AG04450 (cell line): ENCODE measurements at regions of chr7 and their contacts with region 1.

Region 1: DNA sequence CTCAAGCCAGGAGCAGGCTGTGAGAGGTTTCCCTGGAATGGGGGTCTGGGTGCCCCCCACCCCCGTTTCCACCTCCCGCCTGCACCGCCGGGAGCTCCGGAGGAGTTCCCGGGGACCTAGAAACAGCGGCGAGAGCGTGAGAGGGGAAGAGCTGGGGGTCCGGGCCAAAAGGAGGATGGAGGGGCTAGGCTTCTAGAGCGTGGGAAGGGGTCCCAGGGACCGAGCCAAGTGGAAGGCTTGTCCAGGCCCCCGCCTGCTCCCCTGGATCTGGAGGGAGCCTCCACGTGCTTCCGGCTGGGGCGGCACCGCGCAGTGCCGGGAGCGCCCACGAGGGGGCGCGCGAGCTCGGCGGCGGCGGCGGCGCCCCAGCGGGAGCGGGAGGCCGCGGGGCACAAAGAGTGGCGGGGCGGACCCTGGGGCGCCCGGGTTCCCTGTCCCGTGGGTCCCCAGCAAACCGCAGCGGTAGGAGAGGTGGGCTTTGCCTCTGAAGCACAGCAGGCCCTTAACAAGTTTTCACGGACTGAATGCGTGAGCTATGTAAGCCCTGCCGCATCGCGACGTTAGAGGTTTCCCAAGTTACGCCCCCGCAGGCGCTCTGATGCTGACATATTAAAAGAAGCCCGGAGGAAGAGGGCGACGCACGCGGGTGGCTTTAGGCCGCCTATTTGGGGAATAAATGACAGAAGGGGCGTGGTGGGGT is 104.4 kb upstream of the LRRC4 start:
- DNase-seq: no peak
- H3K4me3 ChIP-seq: peak overlapping the region; percentile 65
- H3K27ac ChIP-seq: no peak overlapping the region
- H3K27me3 ChIP-seq: peaks cover 66% of the 10 kb centered on the region
- CTCF ChIP-seq: peak; percentile 60

Region 2: DNA sequence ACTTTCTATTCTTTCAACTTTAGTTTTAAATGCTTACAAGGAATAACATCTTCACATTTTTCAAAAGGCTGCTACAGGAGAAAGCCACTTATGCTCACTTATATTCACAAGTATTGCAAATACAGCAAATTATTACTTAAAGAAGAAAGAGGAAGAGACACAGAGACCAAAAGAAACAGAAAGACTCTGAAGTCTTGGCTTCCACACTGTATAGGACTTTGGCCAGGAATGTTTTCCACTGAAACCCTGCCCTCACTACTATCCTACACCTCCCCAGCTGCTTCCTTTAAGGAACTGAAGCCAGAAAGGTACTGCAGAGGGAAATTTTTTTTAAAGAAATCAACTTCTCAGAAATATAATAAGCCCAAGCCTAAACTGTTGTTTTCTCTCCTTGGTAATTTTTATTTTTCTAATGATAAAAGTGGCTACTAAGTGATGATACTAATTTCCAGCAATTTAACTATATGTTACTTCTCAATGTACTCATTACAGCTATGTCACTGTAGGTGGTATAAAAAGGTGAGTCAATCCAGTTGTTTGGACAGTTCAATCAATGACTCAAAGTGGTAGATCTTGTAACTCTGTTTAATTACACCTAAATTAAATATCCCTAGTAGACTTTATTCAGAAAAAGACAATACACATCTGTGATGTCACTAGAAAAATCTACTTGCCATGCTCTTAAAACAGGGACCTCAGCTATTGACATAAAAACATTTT is 1114.5 kb before region 1 on chr7:
- CTCF ChIA-PET with region 1: no interaction called
- POLR2A ChIA-PET with region 1: no interaction called
- DNase-seq: no peak
- H3K4me3 ChIP-seq: no peak overlapping the region
- H3K27ac ChIP-seq: no peak overlapping the region
- H3K27me3 ChIP-seq: no peaks in the 10 kb centered on the region
- CTCF ChIP-seq: no peak

Region 3: DNA sequence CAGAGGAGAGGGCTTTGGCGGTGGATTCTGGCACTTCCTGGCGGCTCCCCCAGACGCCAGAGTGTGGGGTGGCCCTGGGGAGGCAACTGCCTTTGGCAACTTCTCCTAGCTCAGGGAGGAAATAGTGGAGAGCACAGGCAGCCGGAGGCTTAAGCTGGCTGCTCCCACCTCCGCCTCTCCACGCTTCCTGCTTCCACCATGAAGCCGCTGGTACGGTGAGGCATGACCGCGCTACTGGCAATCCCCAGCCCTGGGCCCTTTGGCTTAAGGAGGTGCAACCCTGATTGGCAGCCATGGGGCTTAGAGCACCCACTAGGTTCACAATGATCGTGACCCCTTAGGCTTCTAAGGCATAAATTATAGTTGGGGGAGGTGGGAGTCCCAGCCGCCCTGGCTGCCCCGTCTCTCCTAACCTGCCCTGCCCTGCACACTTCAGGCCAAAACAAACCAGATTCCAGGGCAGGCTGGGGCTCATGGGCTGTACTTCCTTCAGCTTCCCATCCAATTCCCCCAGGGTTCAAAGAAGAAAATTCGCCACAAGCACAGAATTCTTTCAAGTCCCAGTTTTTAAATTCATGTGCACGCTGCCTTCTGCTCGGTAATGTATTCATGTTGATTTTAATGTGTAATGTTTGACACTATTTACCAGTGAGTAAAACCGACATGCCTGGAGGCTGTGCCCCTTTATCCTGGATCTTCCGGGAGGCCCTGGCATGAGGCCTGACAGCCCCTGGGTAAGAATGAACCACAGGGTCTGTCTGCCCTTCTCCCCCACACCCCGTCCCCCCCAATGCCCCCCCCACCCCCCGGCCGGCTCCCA is 13.7 kb before region 1 on chr7:
- CTCF ChIA-PET with region 1: interaction called, 12 read pairs
- POLR2A ChIA-PET with region 1: interaction called, 4 read pairs
- DNase-seq: no peak
- H3K4me3 ChIP-seq: no peak overlapping the region
- H3K27ac ChIP-seq: no peak overlapping the region
- H3K27me3 ChIP-seq: peaks cover 55% of the 10 kb centered on the region
- CTCF ChIP-seq: no peak

Region 4: DNA sequence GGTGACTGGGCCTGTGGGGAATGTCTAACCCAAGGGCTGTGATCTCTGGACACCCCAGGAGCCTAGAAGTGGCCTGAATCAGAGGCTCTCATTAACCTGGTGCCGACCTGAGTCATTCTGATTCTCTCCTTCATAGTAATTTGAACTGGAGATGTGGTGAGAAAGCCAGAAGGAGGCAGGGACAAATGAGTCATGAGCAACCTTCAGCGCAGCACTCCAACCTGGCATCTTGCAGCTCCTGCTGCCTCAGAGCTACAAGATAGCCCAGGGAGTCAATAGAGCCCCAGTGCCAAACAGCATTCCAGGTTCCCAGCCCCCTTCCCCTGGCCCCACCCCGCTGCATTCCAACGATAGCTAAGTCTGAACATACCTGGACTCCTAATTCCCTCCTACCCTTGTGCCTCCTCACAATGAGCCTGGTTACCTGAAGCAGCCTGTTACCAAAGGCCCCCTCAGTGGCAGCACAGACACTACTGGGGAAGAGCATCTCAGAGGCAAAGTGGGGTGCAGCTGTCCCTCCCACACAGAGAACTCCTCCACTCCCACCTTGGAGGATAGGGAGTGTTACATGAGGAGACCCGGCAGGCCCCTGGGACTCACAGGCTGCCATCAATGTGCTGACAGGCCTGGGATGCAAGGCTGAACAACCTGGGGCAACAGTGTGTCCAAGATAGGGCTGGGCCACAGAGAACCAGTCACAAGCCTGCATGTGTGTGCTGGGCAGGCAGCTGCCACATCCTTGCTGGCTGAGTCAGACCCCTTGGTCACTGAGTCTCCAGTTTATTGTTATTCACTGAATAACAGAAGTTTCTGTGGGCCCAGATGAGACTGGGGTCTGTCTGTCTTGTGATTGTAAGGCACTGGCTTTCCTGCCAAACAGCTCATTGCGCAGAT is 28.6 kb after region 1 on chr7:
- CTCF ChIA-PET with region 1: interaction called, 11 read pairs
- POLR2A ChIA-PET with region 1: no interaction called
- DNase-seq: no peak
- H3K4me3 ChIP-seq: no peak overlapping the region
- H3K27ac ChIP-seq: no peak overlapping the region
- H3K27me3 ChIP-seq: peaks cover 51% of the 10 kb centered on the region
- CTCF ChIP-seq: no peak